SK-N-SH (cell line): ENCODE measurements at regions of chr5 and their contacts with region 1.

Region 1: GRCh38 chr5:150700594-150701293 is at the start of gene RBM22:
- DNase-seq: peak; percentile 87
- H3K4me3 ChIP-seq: peak within 1 kb of the TSS; percentile 76 to 98
- H3K27ac ChIP-seq: peak within 1 kb of the TSS; percentile 87 to 95
- H3K4me1 ChIP-seq: peaks cover 11 to 15% of the 10 kb centered on the region in 2 experiments
- H3K27me3 ChIP-seq: no peaks in the 10 kb centered on the region
- CTCF ChIP-seq: peak; percentile 72
- EP300 ChIP-seq: no peak
- RAD21 ChIP-seq: peak; percentile 1; the same call in 1 of the 2 replicates
- polyA plus RNA-seq, gene RBM22: 30.7 and 41.0 TPM in 2 replicates

Region 2: DNA sequence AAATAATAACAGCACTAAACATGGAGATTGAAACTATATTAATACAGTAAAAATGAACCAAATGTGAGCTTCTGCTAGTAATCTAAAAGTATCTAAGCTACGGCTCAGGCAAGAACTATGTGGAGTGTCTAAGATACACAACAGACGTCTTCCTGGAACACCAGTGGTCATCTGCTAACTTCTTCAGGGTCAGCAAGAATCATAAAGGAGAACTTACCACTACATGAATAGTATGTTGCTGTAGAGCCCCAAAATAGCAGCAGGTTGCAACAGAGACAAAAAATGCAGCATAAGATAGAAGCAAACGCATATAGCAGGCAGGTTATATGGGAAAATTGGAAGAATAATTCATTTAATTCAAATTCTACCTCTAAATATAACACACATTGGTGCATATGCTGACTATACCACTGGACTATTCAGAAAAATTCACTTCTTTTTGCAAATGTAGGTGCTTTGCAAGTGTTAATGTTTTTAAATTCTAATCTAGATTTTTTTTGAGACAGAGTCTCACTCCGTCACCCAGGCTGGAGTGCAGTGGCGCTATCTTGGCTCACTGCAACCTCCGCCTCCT is 31.0 kb after region 1 on chr5:
- CTCF ChIA-PET with region 1: interaction called, 10 read pairs
- POLR2A ChIA-PET with region 1: no interaction called
- DNase-seq: no peak
- H3K4me3 ChIP-seq: no peak overlapping the region
- H3K27ac ChIP-seq: no peak overlapping the region
- H3K4me1 ChIP-seq: no peaks in the 10 kb centered on the region
- H3K27me3 ChIP-seq: no peaks in the 10 kb centered on the region
- CTCF ChIP-seq: no peak
- EP300 ChIP-seq: no peak
- RAD21 ChIP-seq: no peak

Region 3: GRCh38 chr5:150778517-150779396 is 78.0 kb after region 1 on chr5 and contains the start of gene SMIM3:
- CTCF ChIA-PET with region 1: interaction called, 27 read pairs
- POLR2A ChIA-PET with region 1: interaction called, 10 read pairs
- DNase-seq: peak; percentile 86
- H3K4me3 ChIP-seq: peak within 1 kb of the TSS; percentile 85 to 91
- H3K27ac ChIP-seq: peak within 1 kb of the TSS; percentile 81 to 83
- H3K4me1 ChIP-seq: peaks cover 16 to 50% of the 10 kb centered on the region in 2 experiments; a peak in 3 of 4 replicates
- H3K27me3 ChIP-seq: no peaks in the 10 kb centered on the region
- CTCF ChIP-seq: peak; percentile 60
- EP300 ChIP-seq: peak in 1 of 2 experiments; percentile 50; a peak in 1 of 4 replicates
- RAD21 ChIP-seq: peak; percentile 80
- polyA plus RNA-seq, gene SMIM3: 39.9 and 44.8 TPM in 2 replicates